AG04450 (cell line): ENCODE measurements at regions of chr7 and their contacts with region 1.

Region 1: GRCh38 chr7:28921822-28922221 is 36.3 kb downstream of the TRIL start:
- DNase-seq: peak; percentile 13
- H3K4me3 ChIP-seq: no peak overlapping the region
- H3K27ac ChIP-seq: no peak overlapping the region
- H3K27me3 ChIP-seq: peaks cover 23% of the 10 kb centered on the region
- CTCF ChIP-seq: peak; percentile 93

Region 2: GRCh38 chr7:28389504-28390395 is 532.1 kb before region 1 on chr7:
- CTCF ChIA-PET with region 1: interaction called, 23 read pairs
- POLR2A ChIA-PET with region 1: no interaction called
- DNase-seq: peak; percentile 39
- H3K4me3 ChIP-seq: peak overlapping the region; percentile 48
- H3K27ac ChIP-seq: no peak overlapping the region
- H3K27me3 ChIP-seq: no peaks in the 10 kb centered on the region
- CTCF ChIP-seq: peak; percentile 75

Region 3: GRCh38 chr7:28904578-28905048 is 17.2 kb before region 1 on chr7:
- CTCF ChIA-PET with region 1: interaction called, 81 read pairs
- POLR2A ChIA-PET with region 1: no interaction called
- DNase-seq: no peak
- H3K4me3 ChIP-seq: peak overlapping the region; percentile 35
- H3K27ac ChIP-seq: no peak overlapping the region
- H3K27me3 ChIP-seq: peaks cover 18% of the 10 kb centered on the region
- CTCF ChIP-seq: no peak

Region 4: GRCh38 chr7:28955718-28956619 is 34.1 kb after region 1 on chr7:
- CTCF ChIA-PET with region 1: interaction called, 18 read pairs
- POLR2A ChIA-PET with region 1: no interaction called
- DNase-seq: no peak
- H3K4me3 ChIP-seq: peak overlapping the region; percentile 10; the same call in 1 of the 2 replicates
- H3K27ac ChIP-seq: no peak overlapping the region
- H3K27me3 ChIP-seq: peaks cover 57% of the 10 kb centered on the region
- CTCF ChIP-seq: peak; percentile 46

Region 5: GRCh38 chr7:28998105-28998504 is 76.3 kb after region 1 on chr7:
- CTCF ChIA-PET with region 1: interaction called, 13 read pairs
- POLR2A ChIA-PET with region 1: no interaction called
- DNase-seq: no peak
- H3K4me3 ChIP-seq: no peak overlapping the region
- H3K27ac ChIP-seq: no peak overlapping the region
- H3K27me3 ChIP-seq: peaks cover 27% of the 10 kb centered on the region
- CTCF ChIP-seq: no peak

Region 6: DNA sequence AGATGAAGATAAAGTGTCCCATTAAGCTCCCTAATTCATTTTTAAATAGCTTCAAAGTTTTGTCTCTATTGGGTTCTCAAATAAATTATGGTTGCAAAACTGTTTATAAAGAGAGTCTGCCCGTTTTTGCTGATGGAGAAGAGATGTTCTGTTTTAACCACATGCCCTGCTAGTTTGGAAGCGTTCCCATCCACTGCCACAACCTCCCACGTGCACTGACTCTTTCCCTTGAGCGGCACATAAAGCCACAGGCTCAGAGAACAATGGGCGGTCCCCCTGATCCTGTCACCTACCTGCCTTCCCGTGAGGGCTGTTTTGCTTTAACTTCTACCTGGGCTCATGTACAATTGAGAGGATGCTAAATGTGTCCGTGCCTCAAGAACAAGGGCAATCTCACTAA is 159.0 kb after region 1 on chr7:
- CTCF ChIA-PET with region 1: interaction called, 11 read pairs
- POLR2A ChIA-PET with region 1: no interaction called
- DNase-seq: no peak
- H3K4me3 ChIP-seq: no peak overlapping the region
- H3K27ac ChIP-seq: no peak overlapping the region
- H3K27me3 ChIP-seq: no peaks in the 10 kb centered on the region
- CTCF ChIP-seq: no peak